ENCODE measurements at regions of chr11 and their contacts with region 1.

Region 1: DNA sequence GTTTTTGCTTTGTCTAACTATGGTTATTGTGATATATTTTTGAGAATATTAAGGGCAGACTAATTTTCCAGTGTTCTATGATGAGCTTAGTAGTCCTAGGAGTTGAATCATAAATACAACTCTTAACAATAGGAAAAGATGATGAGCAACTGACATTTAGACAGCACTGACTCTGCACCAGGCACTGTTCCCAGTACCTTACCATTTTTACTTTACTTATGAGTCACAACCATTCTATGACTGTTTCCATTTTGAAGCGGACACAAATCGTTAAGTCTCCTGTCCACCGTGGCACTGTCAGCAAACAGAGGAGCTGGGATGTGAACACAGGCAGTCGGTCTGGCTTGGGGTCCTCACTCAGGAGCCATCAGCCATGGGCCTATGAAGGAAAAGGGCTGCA is 3.4 kb upstream of the SCGB2A2 start:
- DNase-seq: no peak
- ATAC-seq: no peak

Region 2: DNA sequence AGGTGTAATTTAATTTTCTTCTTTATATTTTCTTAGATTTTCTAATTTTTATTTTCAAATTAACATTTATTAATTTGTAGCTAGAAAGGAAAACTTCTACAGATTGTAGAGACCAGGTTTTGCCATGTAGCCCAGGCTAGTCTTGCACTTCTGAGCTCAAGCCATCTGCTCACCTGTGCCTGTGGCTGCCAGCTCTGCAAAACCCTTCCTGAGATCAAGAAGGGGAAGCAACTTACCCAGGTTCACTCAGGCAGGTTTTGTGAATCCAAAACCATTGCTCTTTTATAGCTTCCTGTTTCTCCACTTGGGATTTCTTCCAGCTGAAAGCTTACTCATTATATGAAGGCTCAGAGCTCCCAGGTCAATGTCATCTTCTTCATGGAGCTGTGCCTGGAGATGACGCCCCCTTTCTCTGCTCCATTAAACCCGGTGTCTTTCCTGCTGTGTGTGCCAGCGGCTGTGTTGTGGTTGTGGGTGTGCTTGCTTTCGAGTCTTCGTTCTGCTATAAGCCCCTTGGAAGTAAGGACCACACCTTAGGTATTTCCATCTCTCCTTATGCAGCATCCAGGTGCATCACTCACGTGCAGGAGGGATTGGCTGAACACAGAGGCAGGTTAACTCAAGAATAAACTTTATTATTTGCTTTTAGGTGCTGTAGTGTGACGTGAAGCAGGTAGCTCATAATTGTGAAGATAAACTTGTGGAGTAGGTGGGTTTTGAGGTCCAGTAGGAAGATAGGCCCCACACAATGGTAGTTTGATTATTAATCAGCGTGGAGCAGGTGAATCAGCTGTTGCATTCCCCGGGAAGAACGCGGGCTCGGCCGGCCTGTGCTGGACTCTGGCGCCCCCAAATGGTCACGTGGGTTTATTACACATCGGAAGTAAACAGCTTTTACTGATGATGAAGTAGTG is 184.9 kb before region 1 on chr11:
- intact Hi-C with region 1: no loop called
- DNase-seq: peak; percentile 83
- ATAC-seq: peak; percentile 86 to 87

Region 3: DNA sequence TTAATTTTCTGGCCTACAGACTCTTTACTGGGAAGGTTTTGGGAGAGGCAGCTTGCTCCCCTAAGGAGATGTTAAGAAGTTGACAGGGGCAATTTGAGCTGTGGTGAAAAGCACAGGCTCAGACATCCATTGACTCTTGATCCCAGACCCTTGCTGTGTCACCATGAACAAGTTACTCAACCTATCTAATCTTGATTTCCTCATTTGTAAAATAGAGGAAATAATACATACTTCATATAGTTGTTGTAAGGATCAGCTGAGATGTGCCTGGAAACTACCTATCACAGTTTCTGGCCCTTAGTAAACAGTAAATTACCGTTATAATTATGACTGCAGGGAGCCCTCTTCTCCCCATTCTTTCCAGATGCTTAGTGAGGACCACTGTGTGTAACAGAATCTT is 48.9 kb after region 1 on chr11:
- intact Hi-C with region 1: loop called in 1 of 2 experiments (anchors 2 kb)
- DNase-seq: no peak
- ATAC-seq: no peak

Measured in left cardiac atrium (tissue), 4 donors.